CD4-positive, alpha-beta T cell (primary cell): ENCODE measurements at regions of chr17 and their contacts with region 1.

Region 1: DNA sequence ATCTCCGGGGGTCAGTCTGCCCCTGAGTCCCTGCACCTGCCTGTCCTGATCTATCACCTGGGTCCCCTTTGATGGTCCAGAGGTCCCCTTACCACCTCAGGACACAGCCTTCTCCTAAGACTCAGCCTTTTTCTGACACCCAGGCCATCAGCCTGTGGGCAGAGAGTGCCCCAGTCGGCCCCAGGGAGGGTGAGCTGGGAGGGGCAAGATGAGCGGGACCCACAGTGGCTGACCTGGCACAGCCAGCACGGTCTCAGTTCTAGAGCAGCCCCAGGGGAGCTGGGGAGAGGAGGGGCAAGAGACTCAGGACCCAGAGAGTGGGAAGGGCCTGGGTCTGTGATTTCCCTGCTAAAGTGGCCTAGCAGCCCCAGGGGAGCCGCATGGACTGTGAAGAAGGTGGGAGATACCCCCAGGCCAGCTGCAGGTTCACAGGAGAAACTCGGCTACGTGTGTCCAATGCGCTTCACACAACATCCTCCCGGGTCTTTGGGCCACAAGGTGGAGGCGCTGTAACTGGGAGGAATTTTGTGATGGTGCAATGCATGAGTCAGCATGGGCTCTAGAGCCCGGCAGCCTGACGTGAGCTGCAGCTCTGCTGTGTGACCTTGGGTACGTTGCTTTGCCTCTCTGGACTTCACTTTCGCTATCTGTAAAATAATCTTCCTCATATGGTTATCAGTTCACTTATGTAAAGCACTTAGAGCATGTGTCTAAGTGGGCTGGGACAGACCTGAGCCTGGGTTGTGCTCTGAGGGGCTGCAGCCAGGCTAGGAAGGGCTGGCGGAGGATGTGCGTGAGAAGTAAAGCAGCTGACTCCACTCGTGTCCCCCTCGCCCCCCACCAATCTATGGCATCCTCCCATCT is 67.2 kb upstream of the LHX1 start:
- DNase-seq: no peak
- ATAC-seq: no peak
- H3K4me3 ChIP-seq: no peak overlapping the region
- H3K4me3 Mint-ChIP-seq: no peak overlapping the region
- H3K27ac ChIP-seq: no peak overlapping the region
- H3K27ac Mint-ChIP-seq: no peak overlapping the region
- H3K4me1 ChIP-seq: no peaks in the 10 kb centered on the region
- H3K4me1 Mint-ChIP-seq: no peaks in the 10 kb centered on the region
- H3K27me3 ChIP-seq: no peaks in the 10 kb centered on the region
- H3K27me3 Mint-ChIP-seq: peaks cover 19% of the 10 kb centered on the region
- CTCF ChIP-seq: no peak

Region 2: GRCh38 chr17:36808181-36808661 is 61.9 kb before region 1 on chr17:
- CTCF ChIA-PET with region 1: no interaction called
- POLR2A ChIA-PET with region 1: no interaction called
- intact Hi-C with region 1: loop called in 1 of 2 experiments (anchors 10 kb)
- DNase-seq: no peak
- ATAC-seq: no peak
- H3K4me3 ChIP-seq: no peak overlapping the region
- H3K4me3 Mint-ChIP-seq: no peak overlapping the region
- H3K27ac ChIP-seq: no peak overlapping the region
- H3K27ac Mint-ChIP-seq: no peak overlapping the region
- H3K4me1 ChIP-seq: peaks cover 2% of the 10 kb centered on the region
- H3K4me1 Mint-ChIP-seq: no peaks in the 10 kb centered on the region
- H3K27me3 ChIP-seq: peaks cover 42 to 60% of the 10 kb centered on the region in 2 experiments
- H3K27me3 Mint-ChIP-seq: peaks cover 75% of the 10 kb centered on the region
- CTCF ChIP-seq: no peak